HEK293T (cell line): ENCODE measurements at regions of chr1 and their contacts with region 1.

Region 1: GRCh38 chr1:204431310-204432165 is 19.9 kb upstream of the PPP1R15B start:
- DNase-seq: peak; percentile 87

Region 2: GRCh38 chr1:204390751-204391466 is 40.6 kb before region 1 on chr1:
- CTCF ChIA-PET with region 1: no interaction called
- POLR2A ChIA-PET with region 1: no interaction called
- DNase-seq: no peak

Region 3: DNA sequence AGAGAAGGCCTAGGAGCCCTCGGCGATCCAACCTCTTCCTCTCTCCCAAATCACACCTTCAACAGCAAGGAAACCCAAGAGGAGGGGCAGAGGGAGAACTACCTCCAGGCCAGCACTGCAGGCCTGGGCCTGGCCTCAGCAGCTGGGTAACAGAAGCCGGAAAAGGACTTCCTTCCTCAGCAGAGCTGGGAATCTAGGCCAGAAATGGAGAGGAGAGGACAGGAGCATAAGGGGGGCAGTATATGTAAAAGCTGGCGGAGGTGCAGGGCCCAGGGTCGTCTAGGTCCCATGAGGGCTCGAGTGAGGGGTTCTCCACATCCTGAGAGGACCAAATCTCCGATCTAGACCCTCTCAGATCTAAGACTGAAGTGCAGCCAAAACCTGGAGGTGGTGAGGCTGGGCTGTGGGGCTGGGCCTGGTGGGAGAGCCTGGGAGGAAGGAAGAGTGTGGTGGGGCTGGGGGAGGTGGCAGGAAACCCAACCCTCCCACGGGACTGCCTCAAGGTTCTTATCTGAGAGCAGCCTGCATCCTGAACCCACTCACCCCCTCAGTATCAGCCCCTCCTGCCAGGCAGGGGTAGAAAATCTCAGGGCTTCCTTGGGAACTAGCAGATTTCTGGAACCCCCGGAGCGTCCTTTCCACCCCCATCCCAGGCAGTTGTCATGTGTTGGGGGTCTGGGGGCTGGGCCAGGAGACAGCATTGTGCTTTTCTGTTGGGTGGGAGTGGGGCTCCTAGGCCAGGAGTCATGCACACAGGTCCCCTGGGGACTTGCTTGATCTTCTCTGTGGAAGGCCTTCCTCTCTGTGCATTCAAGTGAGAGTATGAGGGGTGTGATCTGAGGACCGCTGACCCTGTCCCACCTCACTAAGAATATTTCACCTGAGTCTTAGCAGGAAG is 30.0 kb after region 1 on chr1:
- CTCF ChIA-PET with region 1: no interaction called
- POLR2A ChIA-PET with region 1: no interaction called
- DNase-seq: no peak

Region 4: GRCh38 chr1:204506961-204507387 is 75.4 kb after region 1 on chr1:
- CTCF ChIA-PET with region 1: interaction called, 24 read pairs
- POLR2A ChIA-PET with region 1: interaction called, 3 read pairs
- DNase-seq: peak; percentile 69